CD4-positive, alpha-beta memory T cell (primary cell): ENCODE measurements at regions of chr17 and their contacts with region 1.

Region 1: GRCh38 chr17:77957857-77958715 is at the start of gene TNRC6C:
- DNase-seq: peak; percentile 99 to 100 (median 100)
- H3K4me3 ChIP-seq: peak within 1 kb of the TSS; percentile 80 to 92
- H3K4me3 Mint-ChIP-seq: peak within 1 kb of the TSS; percentile 93 to 100 (median 98)
- H3K27ac ChIP-seq: peak within 1 kb of the TSS; percentile 68
- H3K27ac Mint-ChIP-seq: peak within 1 kb of the TSS; percentile 91 to 97 (median 95)
- H3K4me1 ChIP-seq: peaks cover 42% of the 10 kb centered on the region
- H3K4me1 Mint-ChIP-seq: peaks cover 25 to 51% (median 38%) of the 10 kb centered on the region in 4 donors
- H3K27me3 ChIP-seq: no peaks in the 10 kb centered on the region
- H3K27me3 Mint-ChIP-seq: peaks cover 0 to 4% of the 10 kb centered on the region in 2 donors
- total RNA-seq, gene TNRC6C: 105 to 112 TPM

Region 2: GRCh38 chr17:76737082-76737675 is 1220.9 kb before region 1 on chr17 and contains the start of gene SRSF2:
- CTCF ChIA-PET with region 1: no interaction called
- POLR2A ChIA-PET with region 1: no interaction called
- intact Hi-C with region 1: loop called (anchors 5 kb)
- DNase-seq: peak; percentile 99 to 100 (median 100)
- H3K4me3 ChIP-seq: peak within 1 kb of the TSS; percentile 76 to 93
- H3K4me3 Mint-ChIP-seq: peak within 1 kb of the TSS; percentile 92 to 98 (median 96)
- H3K27ac ChIP-seq: peak within 1 kb of the TSS; percentile 95
- H3K27ac Mint-ChIP-seq: peak within 1 kb of the TSS; percentile 98 to 100 (median 99)
- H3K4me1 ChIP-seq: peaks cover 58% of the 10 kb centered on the region
- H3K4me1 Mint-ChIP-seq: peaks cover 38 to 66% (median 49%) of the 10 kb centered on the region in 4 donors
- H3K27me3 ChIP-seq: no peaks in the 10 kb centered on the region
- H3K27me3 Mint-ChIP-seq: no peaks in the 10 kb centered on the region
- total RNA-seq, gene SRSF2: 327 to 330 TPM

Region 3: GRCh38 chr17:77609553-77610517 is 348.3 kb before region 1 on chr17:
- CTCF ChIA-PET with region 1: no interaction called
- POLR2A ChIA-PET with region 1: interaction called, 20 read pairs
- intact Hi-C with region 1: loop called (anchors 1 kb)
- DNase-seq: peak; percentile 63 to 77 (median 74)
- H3K4me3 ChIP-seq: peak overlapping the region; percentile 14 to 39
- H3K4me3 Mint-ChIP-seq: peak overlapping the region; percentile 84 to 94 (median 89)
- H3K27ac ChIP-seq: peak overlapping the region; percentile 3
- H3K27ac Mint-ChIP-seq: peak overlapping the region; percentile 79 to 96 (median 92)
- H3K4me1 ChIP-seq: peaks cover 20% of the 10 kb centered on the region
- H3K4me1 Mint-ChIP-seq: peaks cover 17 to 33% (median 23%) of the 10 kb centered on the region in 4 donors
- H3K27me3 ChIP-seq: no peaks in the 10 kb centered on the region
- H3K27me3 Mint-ChIP-seq: no peaks in the 10 kb centered on the region

Region 4: GRCh38 chr17:77783991-77784820 is 173.9 kb before region 1 on chr17:
- CTCF ChIA-PET with region 1: interaction called, 6 read pairs
- POLR2A ChIA-PET with region 1: interaction called, 106 read pairs
- intact Hi-C with region 1: no loop called
- DNase-seq: peak; percentile 76 to 90 (median 81)
- H3K4me3 ChIP-seq: no peak overlapping the region
- H3K4me3 Mint-ChIP-seq: peak overlapping the region; percentile 52 to 84 (median 67)
- H3K27ac ChIP-seq: peak overlapping the region; percentile 76
- H3K27ac Mint-ChIP-seq: peak overlapping the region; percentile 94 to 99 (median 97)
- H3K4me1 ChIP-seq: peaks cover 26% of the 10 kb centered on the region
- H3K4me1 Mint-ChIP-seq: peaks cover 13 to 26% (median 18%) of the 10 kb centered on the region in 4 donors
- H3K27me3 ChIP-seq: no peaks in the 10 kb centered on the region
- H3K27me3 Mint-ChIP-seq: no peaks in the 10 kb centered on the region

Region 5: DNA sequence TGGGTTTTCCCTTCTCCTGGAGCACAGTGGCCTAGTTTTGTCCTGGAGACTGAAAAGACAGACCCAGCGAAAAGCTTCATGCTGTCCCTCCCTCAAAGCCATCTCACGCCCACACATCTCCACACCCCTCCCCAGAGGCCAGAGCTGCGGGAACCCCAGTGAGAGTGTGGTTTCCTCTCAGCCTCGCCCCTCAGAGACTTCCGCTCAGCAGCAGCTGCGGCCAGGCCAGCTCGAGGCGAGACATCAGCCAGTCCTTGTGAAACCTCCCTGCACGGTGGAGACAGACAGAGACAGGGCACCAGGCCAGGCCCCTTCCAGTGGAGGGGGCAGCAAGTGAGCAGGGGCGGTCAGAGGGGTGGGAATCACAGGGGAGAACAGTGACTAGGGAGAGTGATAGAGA is 76.5 kb before region 1 on chr17:
- CTCF ChIA-PET with region 1: interaction called, 5 read pairs
- POLR2A ChIA-PET with region 1: interaction called, 116 read pairs
- intact Hi-C with region 1: loop called (anchors 1 kb)
- DNase-seq: peak; percentile 73 to 85 (median 75)
- H3K4me3 ChIP-seq: peak overlapping the region; percentile 39 to 55
- H3K4me3 Mint-ChIP-seq: peak overlapping the region; percentile 80 to 92 (median 86)
- H3K27ac ChIP-seq: peak overlapping the region; percentile 99
- H3K27ac Mint-ChIP-seq: peak overlapping the region; percentile 96 to 100 (median 99)
- H3K4me1 ChIP-seq: peaks cover 89% of the 10 kb centered on the region
- H3K4me1 Mint-ChIP-seq: peaks cover 65 to 94% (median 81%) of the 10 kb centered on the region in 4 donors
- H3K27me3 ChIP-seq: no peaks in the 10 kb centered on the region
- H3K27me3 Mint-ChIP-seq: no peaks in the 10 kb centered on the region

Region 6: DNA sequence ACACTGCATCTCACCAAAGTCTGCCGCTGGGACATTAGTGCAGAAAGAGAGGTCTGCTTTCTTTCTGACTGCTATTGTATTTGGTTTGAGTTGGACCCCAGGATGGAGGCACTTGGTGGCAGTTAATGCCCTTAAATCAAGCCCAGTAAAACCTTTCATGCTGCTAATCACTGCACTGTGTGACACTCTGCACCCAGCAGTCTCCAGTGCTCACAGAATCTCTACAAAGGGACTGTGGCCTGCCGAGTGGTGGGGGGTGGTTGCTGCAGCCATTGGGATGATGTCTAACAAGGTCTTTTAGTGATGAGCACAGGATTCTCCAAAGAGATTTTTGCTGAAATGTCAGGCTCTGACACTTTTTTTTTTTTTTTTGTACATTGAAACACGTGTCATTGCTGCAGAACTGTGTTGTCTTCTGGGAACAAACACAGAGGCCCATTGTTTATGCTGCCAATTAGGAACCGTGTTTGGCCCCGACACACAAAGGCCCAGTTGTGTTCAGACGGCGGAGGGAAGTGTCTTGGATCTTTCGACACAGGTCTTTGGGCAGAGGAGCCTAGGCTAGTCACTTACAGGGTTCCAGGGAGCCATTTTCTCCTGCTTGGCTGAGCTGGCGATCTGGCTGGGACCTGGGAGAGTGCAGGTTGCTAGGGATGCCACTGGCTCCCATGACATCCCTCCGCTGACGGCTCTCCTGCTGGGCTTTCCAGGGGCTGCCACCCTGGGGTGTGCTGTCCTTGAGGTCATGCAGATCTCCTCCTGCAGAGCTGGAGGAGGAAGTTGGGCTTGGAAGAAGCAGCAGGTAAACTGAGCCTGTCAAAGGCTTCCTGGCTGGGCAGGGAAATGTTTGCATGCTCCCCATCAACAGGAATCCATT is 15.7 kb before region 1 on chr17:
- CTCF ChIA-PET with region 1: no interaction called
- POLR2A ChIA-PET with region 1: interaction called, 15 read pairs
- intact Hi-C with region 1: no loop called
- DNase-seq: no peak
- H3K4me3 ChIP-seq: no peak overlapping the region
- H3K4me3 Mint-ChIP-seq: no peak overlapping the region
- H3K27ac ChIP-seq: no peak overlapping the region
- H3K27ac Mint-ChIP-seq: no peak overlapping the region
- H3K4me1 ChIP-seq: no peaks in the 10 kb centered on the region
- H3K4me1 Mint-ChIP-seq: peaks cover 0 to 2% (median 0%) of the 10 kb centered on the region in 4 donors
- H3K27me3 ChIP-seq: no peaks in the 10 kb centered on the region
- H3K27me3 Mint-ChIP-seq: peaks cover 1 to 2% of the 10 kb centered on the region in 2 donors

Region 7: DNA sequence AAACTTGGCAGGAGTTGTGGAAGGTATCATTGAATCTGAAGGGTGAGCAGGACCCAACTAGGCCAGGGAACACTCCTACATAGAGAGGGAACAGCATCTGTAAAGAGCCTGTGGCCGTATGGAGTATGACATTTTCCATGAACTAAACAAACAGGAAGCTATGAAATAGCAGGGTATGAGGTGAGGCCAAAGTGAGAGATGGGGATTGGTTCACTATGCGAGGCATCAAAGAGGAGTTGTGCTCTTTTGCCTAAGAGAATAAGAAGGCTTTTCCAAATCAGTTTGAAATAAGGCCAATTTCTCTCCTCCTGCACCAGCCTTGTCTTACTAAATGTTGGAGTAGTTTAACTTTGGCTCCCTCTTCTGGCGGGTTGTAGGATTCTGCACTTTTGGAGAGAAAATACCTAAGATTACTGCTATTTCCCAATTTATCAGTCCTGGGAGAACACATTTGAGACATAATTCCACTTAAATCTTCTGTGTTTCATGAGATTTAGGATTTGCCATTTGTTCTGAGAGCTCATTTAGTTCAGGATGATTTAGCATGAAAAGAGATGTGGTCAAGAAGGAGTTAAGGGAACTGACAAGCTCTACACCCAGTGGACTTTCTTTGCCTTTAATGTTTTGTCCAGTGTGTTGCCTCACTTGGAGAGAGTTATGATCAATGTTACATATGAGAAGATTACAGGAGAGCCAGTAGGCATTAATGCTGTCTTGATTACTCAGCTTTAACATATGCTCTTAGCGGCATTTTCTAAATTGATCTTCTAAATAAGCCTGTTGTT is 55.8 kb after region 1 on chr17:
- CTCF ChIA-PET with region 1: interaction called, 19 read pairs
- POLR2A ChIA-PET with region 1: interaction called, 63 read pairs
- intact Hi-C with region 1: loop called (anchors 5 kb)
- DNase-seq: peak; percentile 54 to 62 (median 60)
- H3K4me3 ChIP-seq: no peak overlapping the region
- H3K4me3 Mint-ChIP-seq: no peak overlapping the region
- H3K27ac ChIP-seq: no peak overlapping the region
- H3K27ac Mint-ChIP-seq: peak overlapping the region; percentile 3 to 65 (median 30)
- H3K4me1 ChIP-seq: peaks cover 11% of the 10 kb centered on the region
- H3K4me1 Mint-ChIP-seq: peaks cover 21 to 44% (median 29%) of the 10 kb centered on the region in 4 donors
- H3K27me3 ChIP-seq: no peaks in the 10 kb centered on the region
- H3K27me3 Mint-ChIP-seq: no peaks in the 10 kb centered on the region

Region 8: GRCh38 chr17:78176548-78177025 is 218.5 kb after region 1 on chr17:
- CTCF ChIA-PET with region 1: no interaction called
- POLR2A ChIA-PET with region 1: no interaction called
- intact Hi-C with region 1: no loop called
- DNase-seq: peak; percentile 68 to 77 (median 72)
- H3K4me3 ChIP-seq: no peak overlapping the region
- H3K4me3 Mint-ChIP-seq: no peak overlapping the region
- H3K27ac ChIP-seq: no peak overlapping the region
- H3K27ac Mint-ChIP-seq: peak overlapping the region in 1 of 7 donors; percentile 8
- H3K4me1 ChIP-seq: peaks cover 35% of the 10 kb centered on the region
- H3K4me1 Mint-ChIP-seq: peaks cover 24 to 49% (median 38%) of the 10 kb centered on the region in 4 donors
- H3K27me3 ChIP-seq: no peaks in the 10 kb centered on the region
- H3K27me3 Mint-ChIP-seq: no peaks in the 10 kb centered on the region

Region 9: GRCh38 chr17:78645421-78646295 is 687.6 kb after region 1 on chr17:
- CTCF ChIA-PET with region 1: no interaction called
- POLR2A ChIA-PET with region 1: no interaction called
- intact Hi-C with region 1: no loop called
- DNase-seq: peak; percentile 34 to 78 (median 59)
- H3K4me3 ChIP-seq: no peak overlapping the region
- H3K4me3 Mint-ChIP-seq: peak overlapping the region; percentile 59 to 90 (median 85)
- H3K27ac ChIP-seq: peak overlapping the region; percentile 3
- H3K27ac Mint-ChIP-seq: peak overlapping the region; percentile 84 to 97 (median 92)
- H3K4me1 ChIP-seq: peaks cover 13% of the 10 kb centered on the region
- H3K4me1 Mint-ChIP-seq: peaks cover 6 to 16% (median 11%) of the 10 kb centered on the region in 4 donors
- H3K27me3 ChIP-seq: no peaks in the 10 kb centered on the region
- H3K27me3 Mint-ChIP-seq: peaks cover 3 to 7% of the 10 kb centered on the region in 2 donors